Mammary epithelial cell (primary cell): ENCODE measurements at regions of chr2 and their contacts with region 1.

Region 1: GRCh38 chr2:25951071-25951547 is 31.2 kb downstream of the KIF3C start:
- DNase-seq: peak; percentile 68
- H3K4me3 ChIP-seq: no peak overlapping the region
- H3K27ac ChIP-seq: no peak overlapping the region
- H3K4me1 ChIP-seq: no peaks in the 10 kb centered on the region
- H3K27me3 ChIP-seq: no peaks in the 10 kb centered on the region
- CTCF ChIP-seq: peak; percentile 89 to 95

Region 2: DNA sequence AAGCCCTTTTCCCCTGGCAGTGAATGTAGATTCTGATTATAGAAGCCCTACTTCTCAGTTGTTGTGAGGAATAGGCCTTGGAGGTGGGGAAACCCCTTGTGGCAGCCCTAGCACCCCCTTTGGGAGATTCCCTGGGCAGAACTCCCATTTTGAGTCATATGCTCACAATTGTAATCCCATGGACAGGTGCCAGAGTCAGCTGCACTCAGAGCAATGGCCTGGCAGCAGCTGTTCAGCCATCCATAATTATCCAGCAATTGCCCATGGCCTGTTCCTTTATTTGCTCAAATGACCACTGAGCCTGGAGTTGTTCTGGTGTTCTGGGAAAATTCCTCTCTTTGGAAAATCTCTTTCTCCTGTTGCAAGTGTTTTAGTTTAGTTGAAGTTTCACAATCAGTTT is 1229.6 kb before region 1 on chr2:
- CTCF ChIA-PET with region 1: no interaction called
- dilution Hi-C with region 1: no loop called
- in situ Hi-C with region 1: no loop called
- intact Hi-C with region 1: no loop called
- DNase-seq: peak; percentile 67
- H3K4me3 ChIP-seq: no peak overlapping the region
- H3K27ac ChIP-seq: no peak overlapping the region
- H3K4me1 ChIP-seq: no peaks in the 10 kb centered on the region
- H3K27me3 ChIP-seq: no peaks in the 10 kb centered on the region
- CTCF ChIP-seq: no peak

Region 3: GRCh38 chr2:25851740-25852503 is 99.2 kb before region 1 on chr2:
- CTCF ChIA-PET with region 1: interaction called, 5 read pairs
- dilution Hi-C with region 1: no loop called
- in situ Hi-C with region 1: no loop called
- intact Hi-C with region 1: loop called (anchors 1 kb)
- DNase-seq: peak; percentile 70
- H3K4me3 ChIP-seq: no peak overlapping the region
- H3K27ac ChIP-seq: peak overlapping the region; percentile 7
- H3K4me1 ChIP-seq: peaks cover 7% of the 10 kb centered on the region
- H3K27me3 ChIP-seq: no peaks in the 10 kb centered on the region
- CTCF ChIP-seq: peak; percentile 67 to 72

Region 4: GRCh38 chr2:25991965-25992364 is 40.9 kb after region 1 on chr2:
- CTCF ChIA-PET with region 1: no interaction called
- dilution Hi-C with region 1: no loop called
- in situ Hi-C with region 1: no loop called
- intact Hi-C with region 1: loop called (anchors 2 kb)
- DNase-seq: no peak
- H3K4me3 ChIP-seq: no peak overlapping the region
- H3K27ac ChIP-seq: peak overlapping the region; percentile 47
- H3K4me1 ChIP-seq: peaks cover 10% of the 10 kb centered on the region
- H3K27me3 ChIP-seq: no peaks in the 10 kb centered on the region
- CTCF ChIP-seq: no peak

Region 5: GRCh38 chr2:26088032-26088643 is 137.0 kb after region 1 on chr2:
- CTCF ChIA-PET with region 1: no interaction called
- dilution Hi-C with region 1: no loop called
- in situ Hi-C with region 1: no loop called
- intact Hi-C with region 1: loop called (anchors 5 kb)
- DNase-seq: no peak
- H3K4me3 ChIP-seq: no peak overlapping the region
- H3K27ac ChIP-seq: no peak overlapping the region
- H3K4me1 ChIP-seq: peaks cover 6% of the 10 kb centered on the region
- H3K27me3 ChIP-seq: no peaks in the 10 kb centered on the region
- CTCF ChIP-seq: peak; percentile 67 to 74

Region 6: DNA sequence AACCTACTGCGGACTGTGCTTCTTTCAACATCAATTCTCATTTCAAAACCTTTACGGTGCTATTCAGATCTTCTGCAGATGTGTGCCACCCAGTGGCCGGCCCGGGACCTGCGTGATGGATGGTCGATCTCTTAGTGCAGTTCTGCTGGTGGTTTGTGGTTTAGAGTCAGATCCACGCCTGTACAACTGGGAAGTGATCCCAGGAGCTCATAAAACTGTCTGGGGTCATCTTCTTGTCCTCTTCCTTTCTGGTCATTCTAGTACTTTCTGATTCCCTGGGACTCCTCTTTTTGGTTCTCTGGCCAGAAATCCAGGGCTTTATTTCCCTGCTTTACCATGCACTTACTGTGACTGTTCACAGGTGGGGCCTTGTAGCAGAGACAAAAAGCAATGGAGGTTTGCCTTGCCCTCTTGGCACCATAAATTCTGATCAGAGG is 379.0 kb after region 1 on chr2:
- CTCF ChIA-PET with region 1: no interaction called
- dilution Hi-C with region 1: no loop called
- in situ Hi-C with region 1: no loop called
- intact Hi-C with region 1: loop called (anchors 1 kb)
- DNase-seq: peak; percentile 76
- H3K4me3 ChIP-seq: no peak overlapping the region
- H3K27ac ChIP-seq: no peak overlapping the region
- H3K4me1 ChIP-seq: peaks cover 10% of the 10 kb centered on the region
- H3K27me3 ChIP-seq: no peaks in the 10 kb centered on the region
- CTCF ChIP-seq: peak; percentile 94 to 95